ENCODE measurements at regions of chr18 and their contacts with region 1.

Region 1: GRCh38 chr18:2758309-2758708 is 88.5 kb upstream of the EMILIN2 start:
- DNase-seq: no peak
- H3K4me3 ChIP-seq: no peak overlapping the region
- H3K4me3 Mint-ChIP-seq: no peak overlapping the region
- H3K27ac ChIP-seq: no peak overlapping the region
- H3K27ac Mint-ChIP-seq: peak overlapping the region in 2 of 7 donors; percentile 6 to 14
- H3K4me1 ChIP-seq: no peaks in the 10 kb centered on the region
- H3K4me1 Mint-ChIP-seq: no peaks in the 10 kb centered on the region
- H3K27me3 ChIP-seq: no peaks in the 10 kb centered on the region
- H3K27me3 Mint-ChIP-seq: no peaks in the 10 kb centered on the region
- CTCF ChIP-seq: no peak

Region 2: DNA sequence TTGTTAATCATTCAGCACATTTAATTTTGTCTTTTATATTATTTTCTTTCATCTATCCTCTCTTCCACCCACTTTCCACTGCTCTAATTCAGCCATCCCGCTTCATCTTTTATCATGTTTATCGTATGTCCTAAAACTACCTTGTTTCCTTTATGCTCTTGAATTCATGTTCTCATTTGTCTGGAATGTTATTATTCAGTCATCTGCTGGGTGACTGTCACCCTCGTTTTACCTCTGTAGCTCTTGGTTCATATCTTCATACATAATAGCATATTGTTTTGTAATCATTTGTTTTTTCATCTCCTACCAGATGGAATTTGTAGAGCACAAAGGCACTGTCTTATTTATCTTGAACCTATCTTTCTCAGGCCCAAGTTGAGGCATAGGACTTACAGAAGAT is 65.8 kb before region 1 on chr18:
- intact Hi-C with region 1: loop called in 1 of 2 experiments (anchors 10 kb)
- DNase-seq: no peak
- H3K4me3 ChIP-seq: no peak overlapping the region
- H3K4me3 Mint-ChIP-seq: no peak overlapping the region
- H3K27ac ChIP-seq: peak overlapping the region in 1 of 2 donors; percentile 58
- H3K27ac Mint-ChIP-seq: peak overlapping the region in 2 of 7 donors; percentile 0 to 1
- H3K4me1 ChIP-seq: no peaks in the 10 kb centered on the region
- H3K4me1 Mint-ChIP-seq: no peaks in the 10 kb centered on the region
- H3K27me3 ChIP-seq: no peaks in the 10 kb centered on the region
- H3K27me3 Mint-ChIP-seq: no peaks in the 10 kb centered on the region
- CTCF ChIP-seq: no peak

Region 3: GRCh38 chr18:2706903-2707302 is 51.4 kb before region 1 on chr18:
- intact Hi-C with region 1: loop called in 1 of 2 experiments (anchors 10 kb)
- DNase-seq: peak in 1 of 3 donors; percentile 9
- H3K4me3 ChIP-seq: no peak overlapping the region
- H3K4me3 Mint-ChIP-seq: no peak overlapping the region
- H3K27ac ChIP-seq: peak overlapping the region in 1 of 2 donors; percentile 73
- H3K27ac Mint-ChIP-seq: peak overlapping the region; percentile 30 to 90 (median 69)
- H3K4me1 ChIP-seq: no peaks in the 10 kb centered on the region
- H3K4me1 Mint-ChIP-seq: peaks cover 8% of the 10 kb centered on the region
- H3K27me3 ChIP-seq: no peaks in the 10 kb centered on the region
- H3K27me3 Mint-ChIP-seq: no peaks in the 10 kb centered on the region
- CTCF ChIP-seq: no peak

Measured in CD14-positive monocyte (primary cell).